ENCODE measurements at regions of chr20 and their contacts with region 1.

Region 1: GRCh38 chr20:3051385-3052019 is 5.7 kb downstream of the MRPS26 start:
- DNase-seq: no peak
- ATAC-seq: no peak
- H3K4me3 ChIP-seq: no peak overlapping the region
- H3K27ac ChIP-seq: no peak overlapping the region
- H3K4me1 ChIP-seq: peaks cover 11% of the 10 kb centered on the region
- H3K27me3 ChIP-seq: no peaks in the 10 kb centered on the region
- CTCF ChIP-seq: no peak
- POLR2A ChIP-seq: no peak

Region 2: DNA sequence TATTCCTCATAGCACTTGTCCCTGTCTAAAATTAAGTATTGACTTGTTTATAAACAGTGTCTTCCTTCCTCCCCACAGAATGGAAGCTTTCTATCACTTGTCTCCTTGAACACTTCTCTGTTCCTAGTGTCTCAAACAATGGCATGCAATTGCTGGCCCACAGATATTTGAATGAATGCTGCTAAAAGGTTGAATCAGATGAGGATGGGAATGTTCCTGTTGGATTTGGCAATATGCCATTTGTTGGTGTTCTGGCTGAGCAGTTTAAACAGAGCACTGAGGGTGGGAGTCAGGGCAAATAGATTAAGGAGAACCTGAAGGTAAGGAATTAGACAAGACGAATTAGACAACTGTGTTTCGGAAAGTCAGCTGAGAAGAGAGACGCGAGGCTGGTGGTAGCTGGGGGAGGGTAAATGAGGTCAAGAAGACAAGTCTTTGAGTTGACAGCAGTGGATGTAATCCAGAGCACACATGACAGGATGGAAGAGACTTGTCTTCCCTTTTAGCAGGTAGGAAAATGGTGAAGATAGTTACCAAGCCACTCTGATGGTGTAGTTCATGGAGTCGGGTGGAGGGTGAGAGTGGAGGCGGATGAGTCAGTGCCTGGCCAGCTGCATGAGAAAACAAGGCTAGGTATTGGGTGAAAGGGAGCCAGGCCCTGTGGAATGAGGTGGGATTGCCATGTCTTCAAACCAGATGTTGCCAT is 66.4 kb before region 1 on chr20:
- intact Hi-C with region 1: no loop called
- DNase-seq: no peak
- ATAC-seq: no peak
- H3K4me3 ChIP-seq: no peak overlapping the region
- H3K27ac ChIP-seq: no peak overlapping the region
- H3K4me1 ChIP-seq: no peaks in the 10 kb centered on the region
- H3K27me3 ChIP-seq: no peaks in the 10 kb centered on the region
- CTCF ChIP-seq: no peak
- POLR2A ChIP-seq: no peak

Region 3: GRCh38 chr20:3115190-3116107 is 63.9 kb after region 1 on chr20:
- intact Hi-C with region 1: loop called (anchors 10 kb)
- DNase-seq: peak; percentile 20 to 51 (median 41)
- ATAC-seq: peak; percentile 60
- H3K4me3 ChIP-seq: no peak overlapping the region
- H3K27ac ChIP-seq: no peak overlapping the region
- H3K4me1 ChIP-seq: peaks cover 7% of the 10 kb centered on the region
- H3K27me3 ChIP-seq: no peaks in the 10 kb centered on the region
- CTCF ChIP-seq: peak; percentile 31 to 82 (median 64)
- POLR2A ChIP-seq: no peak